Naive thymus-derived CD4-positive, alpha-beta T cell (primary cell): ENCODE measurements at regions of chr3 and their contacts with region 1.

Region 1: GRCh38 chr3:187745201-187746058 is at the start of gene BCL6:
- DNase-seq: peak; percentile 84 to 97 (median 94)
- ATAC-seq: peak; percentile 79
- H3K4me3 ChIP-seq: peak within 1 kb of the TSS; percentile 95
- H3K4me3 Mint-ChIP-seq: peak within 1 kb of the TSS; percentile 86 to 100 (median 98)
- H3K27ac ChIP-seq: peak within 1 kb of the TSS; percentile 96
- H3K27ac Mint-ChIP-seq: peak within 1 kb of the TSS; percentile 99 to 100 (median 100)
- H3K4me1 ChIP-seq: peaks cover 19 to 34% of the 10 kb centered on the region in 2 donors
- H3K4me1 Mint-ChIP-seq: peaks cover 30 to 77% (median 75%) of the 10 kb centered on the region in 7 donors
- H3K27me3 ChIP-seq: no peaks in the 10 kb centered on the region
- H3K27me3 Mint-ChIP-seq: peaks cover 0 to 16% (median 0%) of the 10 kb centered on the region in 5 donors
- total RNA-seq, gene BCL6: 13.4 to 154 (median 29.5) TPM

Region 2: DNA sequence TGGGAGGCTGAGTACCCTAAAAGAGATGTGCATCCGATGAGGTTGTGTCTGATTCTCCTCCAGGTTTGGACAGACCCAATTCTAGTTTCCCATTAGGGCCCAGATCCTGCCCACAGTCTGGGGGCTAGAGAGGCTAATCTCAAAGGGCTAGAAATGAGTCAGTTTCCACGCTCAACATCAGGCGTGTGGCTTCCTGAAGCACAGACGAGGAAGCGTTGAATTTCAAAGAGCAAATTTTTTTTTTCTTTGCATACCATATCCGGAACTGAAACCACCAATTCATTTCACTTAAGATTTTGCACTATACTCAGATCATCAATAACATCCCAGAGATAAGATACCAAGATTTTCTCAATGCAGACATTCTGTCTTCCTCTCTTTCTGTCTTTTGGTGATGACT is 173.6 kb after region 1 on chr3:
- CTCF ChIA-PET with region 1: no interaction called
- POLR2A ChIA-PET with region 1: no interaction called
- intact Hi-C with region 1: loop called (anchors 1 kb)
- DNase-seq: peak in 8 of 9 donors; percentile 50 to 64 (median 60)
- ATAC-seq: peak; percentile 90
- H3K4me3 ChIP-seq: peak overlapping the region; percentile 48
- H3K4me3 Mint-ChIP-seq: peak overlapping the region; percentile 69 to 86 (median 81)
- H3K27ac ChIP-seq: peak overlapping the region; percentile 13
- H3K27ac Mint-ChIP-seq: peak overlapping the region; percentile 58 to 94 (median 90)
- H3K4me1 ChIP-seq: peaks cover 15 to 28% of the 10 kb centered on the region in 2 donors
- H3K4me1 Mint-ChIP-seq: peaks cover 34 to 80% (median 48%) of the 10 kb centered on the region in 7 donors
- H3K27me3 ChIP-seq: no peaks in the 10 kb centered on the region
- H3K27me3 Mint-ChIP-seq: peaks cover 0 to 10% (median 0%) of the 10 kb centered on the region in 5 donors

Region 3: DNA sequence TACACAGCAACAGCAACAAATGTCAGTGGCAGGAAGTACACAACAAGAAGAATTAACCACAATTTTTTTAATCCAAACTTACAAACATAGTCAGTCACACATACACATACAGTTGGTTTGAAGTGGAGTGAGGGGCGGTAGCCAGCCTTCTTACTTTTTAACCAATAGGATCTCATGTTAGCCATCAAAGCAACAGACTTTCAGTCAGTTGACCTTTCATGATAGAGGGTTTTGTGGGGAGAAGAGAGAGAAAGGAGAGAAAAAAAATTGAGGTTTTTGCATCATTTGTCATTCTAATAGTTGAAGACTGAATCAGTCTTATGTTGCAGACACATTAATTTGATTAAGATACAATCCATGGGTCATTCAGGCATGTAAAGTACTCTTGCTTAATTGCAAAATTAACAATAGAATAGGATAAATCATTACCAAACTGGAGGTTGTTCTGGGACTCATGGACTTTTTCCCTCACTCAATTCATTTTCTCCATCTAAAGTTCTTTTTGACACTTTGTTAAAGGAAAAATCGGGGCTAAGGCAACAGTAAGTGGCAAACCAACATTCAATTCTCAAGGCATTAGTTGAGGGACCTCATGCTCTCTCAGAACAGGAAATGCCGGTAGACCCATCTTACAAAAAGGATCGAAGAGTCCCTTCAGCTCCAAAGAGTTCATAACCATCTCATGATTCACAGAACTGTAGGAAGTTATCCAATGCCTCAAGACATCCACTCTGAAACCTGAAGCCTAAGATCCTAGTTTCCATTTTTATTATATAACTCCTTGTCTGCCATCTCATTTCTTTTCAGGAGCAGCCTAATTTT is 249.0 kb after region 1 on chr3:
- CTCF ChIA-PET with region 1: interaction called, 4 read pairs
- POLR2A ChIA-PET with region 1: no interaction called
- intact Hi-C with region 1: loop called in 1 of 2 experiments (anchors 1 kb)
- DNase-seq: peak in 2 of 9 donors; percentile 25 to 36
- ATAC-seq: peak; percentile 84
- H3K4me3 ChIP-seq: no peak overlapping the region
- H3K4me3 Mint-ChIP-seq: peak overlapping the region in 9 of 10 donors; percentile 4 to 77 (median 59)
- H3K27ac ChIP-seq: no peak overlapping the region
- H3K27ac Mint-ChIP-seq: peak overlapping the region in 7 of 9 donors; percentile 3 to 90 (median 48)
- H3K4me1 ChIP-seq: peaks cover 32 to 37% of the 10 kb centered on the region in 2 donors
- H3K4me1 Mint-ChIP-seq: peaks cover 36 to 77% (median 65%) of the 10 kb centered on the region in 7 donors
- H3K27me3 ChIP-seq: no peaks in the 10 kb centered on the region
- H3K27me3 Mint-ChIP-seq: no peaks in the 10 kb centered on the region

Region 4: GRCh38 chr3:188154014-188154808 is 408.8 kb after region 1 on chr3 and contains the start of gene LPP:
- CTCF ChIA-PET with region 1: interaction called, 4 read pairs
- POLR2A ChIA-PET with region 1: interaction called, 4 read pairs
- intact Hi-C with region 1: loop called (anchors 1 kb)
- DNase-seq: peak; percentile 64 to 88 (median 77)
- ATAC-seq: peak; percentile 92
- H3K4me3 ChIP-seq: peak within 1 kb of the TSS; percentile 76
- H3K4me3 Mint-ChIP-seq: peak within 1 kb of the TSS; percentile 78 to 95 (median 91)
- H3K27ac ChIP-seq: peak within 1 kb of the TSS; percentile 75
- H3K27ac Mint-ChIP-seq: peak within 1 kb of the TSS; percentile 58 to 98 (median 88)
- H3K4me1 ChIP-seq: peaks cover 21 to 29% of the 10 kb centered on the region in 2 donors
- H3K4me1 Mint-ChIP-seq: peaks cover 40 to 67% (median 58%) of the 10 kb centered on the region in 7 donors
- H3K27me3 ChIP-seq: no peaks in the 10 kb centered on the region
- H3K27me3 Mint-ChIP-seq: no peaks in the 10 kb centered on the region
- total RNA-seq, gene LPP: 12.5 to 95.2 (median 52.3) TPM

Region 5: DNA sequence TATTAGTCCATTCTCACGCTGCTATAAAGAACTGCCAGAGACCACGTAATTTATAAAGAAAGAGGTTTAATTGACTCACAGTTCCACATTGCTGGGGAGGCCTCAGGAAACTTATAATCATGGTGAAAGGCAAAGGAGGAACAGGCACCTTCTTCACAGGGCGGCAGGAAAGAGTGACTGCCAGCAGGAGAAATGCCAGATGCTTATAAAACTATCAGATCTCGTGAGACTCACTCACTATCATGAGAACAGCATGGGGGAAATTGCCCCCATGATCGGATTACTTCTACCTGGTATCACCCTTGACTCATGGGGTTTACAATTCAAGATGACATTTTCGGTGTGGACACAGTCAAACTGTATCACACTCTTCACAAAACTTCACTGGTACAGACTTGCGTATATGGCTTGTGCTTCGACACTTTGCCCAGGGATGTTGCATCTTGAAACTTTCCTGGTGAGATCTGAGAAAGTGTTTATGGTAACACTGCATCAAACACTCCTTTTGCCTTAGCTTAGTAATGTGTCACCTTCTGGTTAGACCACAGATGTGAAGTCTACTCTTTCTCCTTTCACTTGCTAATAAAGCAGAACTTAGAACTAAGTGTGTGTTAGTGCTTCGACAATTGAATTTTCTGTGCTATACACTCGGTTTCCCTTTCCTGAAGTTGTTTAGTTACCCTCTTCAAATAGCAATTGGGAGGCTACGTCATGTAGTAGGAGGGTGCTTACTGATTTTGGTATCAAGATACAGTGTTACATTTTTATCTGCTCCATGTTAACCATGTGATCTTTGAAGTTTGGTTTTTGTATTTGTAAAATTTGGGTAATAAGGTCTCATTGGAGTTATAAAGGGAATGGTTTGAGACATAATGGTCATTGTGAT is 594.2 kb after region 1 on chr3:
- CTCF ChIA-PET with region 1: no interaction called
- POLR2A ChIA-PET with region 1: no interaction called
- intact Hi-C with region 1: loop called in 1 of 2 experiments (anchors 5 kb)
- DNase-seq: peak in 1 of 9 donors; percentile 41
- ATAC-seq: peak; percentile 89
- H3K4me3 ChIP-seq: peak overlapping the region; percentile 5
- H3K4me3 Mint-ChIP-seq: peak overlapping the region in 4 of 10 donors; percentile 2 to 71 (median 4)
- H3K27ac ChIP-seq: no peak overlapping the region
- H3K27ac Mint-ChIP-seq: peak overlapping the region in 3 of 9 donors; percentile 6 to 80 (median 80)
- H3K4me1 ChIP-seq: peaks cover 0 to 17% of the 10 kb centered on the region in 2 donors
- H3K4me1 Mint-ChIP-seq: peaks cover 12 to 33% (median 19%) of the 10 kb centered on the region in 7 donors
- H3K27me3 ChIP-seq: no peaks in the 10 kb centered on the region
- H3K27me3 Mint-ChIP-seq: peaks cover 0 to 12% (median 0%) of the 10 kb centered on the region in 5 donors

Region 6: DNA sequence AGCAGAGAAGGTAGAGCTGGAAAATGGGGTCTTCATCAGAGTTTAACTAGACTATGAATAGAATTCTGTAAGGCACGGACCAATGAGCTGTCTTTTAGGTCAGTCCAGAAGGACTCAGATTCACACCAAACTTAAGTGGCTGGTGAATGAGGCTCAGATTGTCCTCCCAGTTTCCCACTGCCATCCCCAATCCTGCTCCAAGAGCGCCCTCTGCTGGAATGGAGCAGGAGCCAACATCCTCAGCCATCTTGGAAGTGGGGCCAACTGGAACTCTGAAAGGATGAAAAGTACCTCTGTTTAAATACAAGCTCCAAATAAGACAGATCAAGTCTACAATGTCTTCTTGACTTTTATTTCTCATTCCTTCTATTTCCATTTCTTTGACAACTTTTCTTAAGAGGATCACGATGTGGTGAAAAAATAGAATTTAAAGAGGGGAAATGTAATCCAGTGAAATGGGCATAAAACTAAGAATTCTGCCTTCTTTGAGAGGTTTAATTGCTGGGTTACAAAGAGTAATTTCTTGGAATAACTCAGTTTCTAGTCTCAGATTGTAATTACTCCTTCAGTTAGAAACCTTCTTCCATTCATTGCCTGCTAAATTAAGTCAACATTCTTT is 1209.3 kb after region 1 on chr3:
- CTCF ChIA-PET with region 1: interaction called, 322 read pairs
- POLR2A ChIA-PET with region 1: interaction called, 33 read pairs
- intact Hi-C with region 1: loop called in 1 of 2 experiments (anchors 1 kb)
- DNase-seq: peak; percentile 35 to 80 (median 63)
- ATAC-seq: peak; percentile 83
- H3K4me3 ChIP-seq: no peak overlapping the region
- H3K4me3 Mint-ChIP-seq: no peak overlapping the region
- H3K27ac ChIP-seq: no peak overlapping the region
- H3K27ac Mint-ChIP-seq: no peak overlapping the region
- H3K4me1 ChIP-seq: no peaks in the 10 kb centered on the region
- H3K4me1 Mint-ChIP-seq: peaks cover 0 to 30% (median 0%) of the 10 kb centered on the region in 7 donors
- H3K27me3 ChIP-seq: no peaks in the 10 kb centered on the region
- H3K27me3 Mint-ChIP-seq: peaks cover 0 to 5% (median 0%) of the 10 kb centered on the region in 5 donors